Naive thymus-derived CD4-positive, alpha-beta T cell (primary cell): ENCODE measurements at regions of chr22 and their contacts with region 1.

Region 1: DNA sequence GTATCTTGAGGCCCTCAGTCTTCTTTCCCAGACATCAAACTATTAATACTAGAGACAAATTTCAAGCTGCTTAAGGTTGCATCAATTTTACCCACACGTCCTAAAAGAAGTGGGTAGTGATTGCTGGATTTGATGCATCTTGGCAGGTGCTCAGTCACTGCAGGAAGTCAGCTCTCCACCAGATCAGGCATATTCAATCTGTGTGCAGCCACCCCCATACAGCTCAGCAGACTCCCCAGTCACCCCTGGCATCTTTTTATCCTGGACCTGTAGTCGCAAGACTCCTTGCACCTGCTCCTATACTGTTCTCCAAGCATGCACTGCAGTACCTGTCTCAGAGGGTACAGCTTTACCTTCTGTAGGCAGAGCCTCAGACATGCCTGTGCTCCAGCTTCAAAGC is 343.1 kb upstream of the ISX start:
- DNase-seq: no peak
- ATAC-seq: no peak
- H3K4me3 ChIP-seq: no peak overlapping the region
- H3K4me3 Mint-ChIP-seq: no peak overlapping the region
- H3K27ac ChIP-seq: no peak overlapping the region
- H3K27ac Mint-ChIP-seq: no peak overlapping the region
- H3K4me1 ChIP-seq: no peaks in the 10 kb centered on the region
- H3K4me1 Mint-ChIP-seq: no peaks in the 10 kb centered on the region
- H3K27me3 ChIP-seq: no peaks in the 10 kb centered on the region
- H3K27me3 Mint-ChIP-seq: peaks cover 0 to 35% (median 11%) of the 10 kb centered on the region in 5 donors

Region 2: GRCh38 chr22:34784056-34784455 is 61.2 kb after region 1 on chr22:
- CTCF ChIA-PET with region 1: no interaction called
- POLR2A ChIA-PET with region 1: no interaction called
- intact Hi-C with region 1: loop called in 1 of 2 experiments (anchors 10 kb)
- DNase-seq: no peak
- ATAC-seq: no peak
- H3K4me3 ChIP-seq: no peak overlapping the region
- H3K4me3 Mint-ChIP-seq: no peak overlapping the region
- H3K27ac ChIP-seq: no peak overlapping the region
- H3K27ac Mint-ChIP-seq: no peak overlapping the region
- H3K4me1 ChIP-seq: no peaks in the 10 kb centered on the region
- H3K4me1 Mint-ChIP-seq: no peaks in the 10 kb centered on the region
- H3K27me3 ChIP-seq: no peaks in the 10 kb centered on the region
- H3K27me3 Mint-ChIP-seq: peaks cover 0 to 23% (median 5%) of the 10 kb centered on the region in 5 donors